ENCODE measurements at regions of chr19 and their contacts with region 1.

Region 1: DNA sequence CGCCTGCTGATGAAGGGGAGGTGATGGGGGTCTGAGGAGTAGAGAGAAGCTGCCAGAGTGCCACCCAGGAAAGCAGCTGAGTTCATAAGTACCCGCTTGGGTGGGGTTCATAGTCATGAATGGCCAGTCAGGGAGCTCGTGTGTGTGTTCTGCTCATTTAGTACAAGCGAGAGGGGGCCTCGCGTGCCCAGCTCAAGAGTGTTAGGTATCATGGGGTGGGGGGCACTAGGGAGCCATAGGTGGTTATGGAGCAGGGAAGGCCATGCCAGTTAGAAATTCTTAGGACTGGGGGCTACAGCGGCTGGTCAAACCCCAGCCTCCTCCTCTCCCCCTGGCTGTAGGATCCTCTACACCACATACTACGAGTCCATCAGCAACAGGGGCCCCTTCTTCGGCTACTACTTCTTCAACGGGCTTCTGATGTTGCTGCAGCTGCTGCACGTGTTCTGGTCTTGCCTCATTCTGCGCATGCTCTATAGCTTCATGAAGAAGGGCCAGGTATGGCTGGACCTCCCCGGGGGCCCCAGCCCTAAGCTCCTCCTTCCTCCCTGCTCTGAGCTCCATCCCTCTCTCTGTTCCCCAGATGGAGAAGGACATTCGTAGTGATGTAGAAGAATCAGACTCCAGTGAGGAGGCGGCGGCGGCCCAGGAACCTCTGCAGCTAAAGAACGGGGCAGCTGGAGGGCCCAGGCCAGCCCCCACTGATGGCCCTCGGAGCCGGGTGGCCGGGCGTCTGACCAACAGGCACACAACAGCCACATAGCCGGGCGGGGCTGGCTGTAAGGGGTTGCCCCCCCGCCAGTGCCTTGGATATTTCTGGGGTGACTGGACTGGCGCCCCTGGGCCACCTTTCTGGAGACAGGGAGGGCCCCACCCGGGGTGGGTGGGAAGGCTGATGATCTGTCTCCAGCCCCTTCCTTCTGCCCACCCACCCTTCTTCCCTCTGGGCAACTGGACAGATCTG is 46.5 kb downstream of the CD320 start:
- DNase-seq: no peak
- ATAC-seq: peak in 2 of 8 donors; percentile 13 to 16
- H3K4me3 ChIP-seq: no peak overlapping the region
- H3K27ac ChIP-seq: no peak overlapping the region
- H3K4me1 ChIP-seq: peaks cover 0 to 10% (median 0%) of the 10 kb centered on the region in 9 donors
- H3K27me3 ChIP-seq: no peaks in the 10 kb centered on the region
- CTCF ChIP-seq: no peak

Region 2: GRCh38 chr19:8307965-8308866 is 46.6 kb after region 1 on chr19 and contains the start of gene CD320:
- intact Hi-C with region 1: loop called in 2 of 10 experiments (anchors 5 to 10 kb)
- DNase-seq: peak; percentile 90 to 93
- ATAC-seq: peak; percentile 93 to 96 (median 94)
- H3K4me3 ChIP-seq: peak within 1 kb of the TSS; percentile 48 to 76 (median 63)
- H3K27ac ChIP-seq: peak within 1 kb of the TSS in 9 of 10 donors; percentile 33 to 83 (median 65)
- H3K4me1 ChIP-seq: peaks cover 9 to 56% (median 44%) of the 10 kb centered on the region in 9 donors
- H3K27me3 ChIP-seq: peaks cover 0 to 5% (median 0%) of the 10 kb centered on the region in 7 donors
- CTCF ChIP-seq: no peak
- total RNA-seq, gene CD320: 20.3 to 38.9 (median 26.0) TPM